Panc1 (cell line): ENCODE measurements at regions of chr16 and their contacts with region 1.

Region 1: GRCh38 chr16:3027945-3028712 is 4.3 kb downstream of the THOC6 start:
- DNase-seq: peak; percentile 32
- ATAC-seq: peak; percentile 51
- H3K4me3 ChIP-seq: no peak overlapping the region
- H3K27ac ChIP-seq: no peak overlapping the region
- H3K4me1 ChIP-seq: peaks cover 6% of the 10 kb centered on the region
- H3K27me3 ChIP-seq: no peaks in the 10 kb centered on the region
- CTCF ChIP-seq: peak; percentile 96

Region 2: GRCh38 chr16:2513405-2514322 is 514.5 kb before region 1 on chr16 and contains the start of gene ATP6V0C:
- CTCF ChIA-PET with region 1: no interaction called
- POLR2A ChIA-PET with region 1: no interaction called
- in situ Hi-C with region 1: no loop called
- intact Hi-C with region 1: no loop called
- DNase-seq: no peak
- ATAC-seq: peak; percentile 89
- H3K4me3 ChIP-seq: peak within 1 kb of the TSS; percentile 85 to 95
- H3K27ac ChIP-seq: peak within 1 kb of the TSS; percentile 90
- H3K4me1 ChIP-seq: peaks cover 36% of the 10 kb centered on the region
- H3K27me3 ChIP-seq: no peaks in the 10 kb centered on the region
- CTCF ChIP-seq: no peak
- total RNA-seq, gene ATP6V0C: 282 TPM

Region 3: GRCh38 chr16:2883027-2883851 is 144.9 kb before region 1 on chr16 and contains the start of gene FLYWCH2:
- CTCF ChIA-PET with region 1: interaction called, 11 read pairs
- POLR2A ChIA-PET with region 1: no interaction called
- in situ Hi-C with region 1: no loop called
- intact Hi-C with region 1: no loop called
- DNase-seq: peak; percentile 89
- ATAC-seq: peak; percentile 87
- H3K4me3 ChIP-seq: peak within 1 kb of the TSS; percentile 76 to 81
- H3K27ac ChIP-seq: peak within 1 kb of the TSS; percentile 84
- H3K4me1 ChIP-seq: peaks cover 3% of the 10 kb centered on the region; the same call in 1 of the 2 replicates
- H3K27me3 ChIP-seq: no peaks in the 10 kb centered on the region
- CTCF ChIP-seq: no peak
- total RNA-seq, gene FLYWCH2: 77.3 TPM

Region 4: GRCh38 chr16:3003582-3004302 is 24.4 kb before region 1 on chr16:
- CTCF ChIA-PET with region 1: interaction called, 11 read pairs
- POLR2A ChIA-PET with region 1: interaction called, 10 read pairs
- in situ Hi-C with region 1: no loop called
- intact Hi-C with region 1: no loop called
- DNase-seq: peak; percentile 98
- ATAC-seq: peak; percentile 97
- H3K4me3 ChIP-seq: peak overlapping the region; percentile 36 to 37
- H3K27ac ChIP-seq: peak overlapping the region; percentile 69
- H3K4me1 ChIP-seq: peaks cover 25% of the 10 kb centered on the region
- H3K27me3 ChIP-seq: no peaks in the 10 kb centered on the region
- CTCF ChIP-seq: peak; percentile 92

Region 5: GRCh38 chr16:3045357-3045728 is 17.2 kb after region 1 on chr16:
- CTCF ChIA-PET with region 1: interaction called, 10 read pairs
- POLR2A ChIA-PET with region 1: interaction called, 4 read pairs
- in situ Hi-C with region 1: no loop called
- intact Hi-C with region 1: no loop called
- DNase-seq: no peak
- ATAC-seq: peak; percentile 72
- H3K4me3 ChIP-seq: peak overlapping the region; percentile 51 to 59
- H3K27ac ChIP-seq: no peak overlapping the region
- H3K4me1 ChIP-seq: no peaks in the 10 kb centered on the region
- H3K27me3 ChIP-seq: no peaks in the 10 kb centered on the region
- CTCF ChIP-seq: no peak